ENCODE measurements at regions of chr6 and their contacts with region 1.

Region 1: DNA sequence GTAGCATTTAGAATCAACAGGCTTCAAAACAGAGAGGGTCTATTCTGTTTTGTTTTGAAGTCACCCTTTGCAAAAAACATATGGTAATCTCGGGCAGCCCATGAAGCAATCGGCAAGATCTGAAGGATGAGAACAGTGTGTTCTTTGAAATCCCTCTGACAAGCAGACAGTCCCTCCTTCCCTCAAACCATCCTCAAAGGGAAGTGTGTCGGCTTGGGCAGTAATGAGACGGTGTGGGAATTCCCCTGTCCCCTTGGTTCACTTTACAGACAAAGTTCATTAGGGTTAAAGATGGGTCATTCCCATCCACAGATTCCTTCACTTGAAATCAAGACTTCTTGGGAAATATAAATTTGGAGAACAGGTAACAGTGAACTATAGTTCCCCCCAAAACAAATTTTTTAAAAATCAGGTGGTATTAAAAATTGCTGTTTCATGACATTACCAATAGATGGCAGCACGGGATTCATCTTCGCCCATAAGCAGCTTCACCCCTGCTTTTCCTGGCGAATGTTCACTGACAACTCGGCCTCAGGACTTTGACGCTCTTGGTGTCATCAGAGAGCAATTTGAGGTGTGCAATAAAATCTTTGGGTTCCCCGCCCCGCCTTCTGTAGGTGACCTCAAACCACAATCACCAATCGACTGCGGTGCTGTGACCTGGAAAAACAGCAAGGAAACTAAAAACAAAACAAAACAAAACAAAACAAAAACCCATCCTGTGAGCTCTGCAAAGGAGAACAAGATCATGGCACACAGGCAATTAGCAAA is 159.3 kb upstream of the TNFAIP3 start:
- DNase-seq: peak; percentile 89
- H3K4me3 Mint-ChIP-seq: peak overlapping the region; percentile 70
- H3K27ac Mint-ChIP-seq: peak overlapping the region; percentile 94
- H3K4me1 Mint-ChIP-seq: peaks cover 76% of the 10 kb centered on the region
- H3K27me3 Mint-ChIP-seq: no peaks in the 10 kb centered on the region

Region 2: GRCh38 chr6:137552809-137553208 is 155.0 kb before region 1 on chr6:
- intact Hi-C with region 1: no loop called
- DNase-seq: no peak
- H3K4me3 Mint-ChIP-seq: no peak overlapping the region
- H3K27ac Mint-ChIP-seq: no peak overlapping the region
- H3K4me1 Mint-ChIP-seq: no peaks in the 10 kb centered on the region
- H3K27me3 Mint-ChIP-seq: peaks cover 13% of the 10 kb centered on the region

Region 3: DNA sequence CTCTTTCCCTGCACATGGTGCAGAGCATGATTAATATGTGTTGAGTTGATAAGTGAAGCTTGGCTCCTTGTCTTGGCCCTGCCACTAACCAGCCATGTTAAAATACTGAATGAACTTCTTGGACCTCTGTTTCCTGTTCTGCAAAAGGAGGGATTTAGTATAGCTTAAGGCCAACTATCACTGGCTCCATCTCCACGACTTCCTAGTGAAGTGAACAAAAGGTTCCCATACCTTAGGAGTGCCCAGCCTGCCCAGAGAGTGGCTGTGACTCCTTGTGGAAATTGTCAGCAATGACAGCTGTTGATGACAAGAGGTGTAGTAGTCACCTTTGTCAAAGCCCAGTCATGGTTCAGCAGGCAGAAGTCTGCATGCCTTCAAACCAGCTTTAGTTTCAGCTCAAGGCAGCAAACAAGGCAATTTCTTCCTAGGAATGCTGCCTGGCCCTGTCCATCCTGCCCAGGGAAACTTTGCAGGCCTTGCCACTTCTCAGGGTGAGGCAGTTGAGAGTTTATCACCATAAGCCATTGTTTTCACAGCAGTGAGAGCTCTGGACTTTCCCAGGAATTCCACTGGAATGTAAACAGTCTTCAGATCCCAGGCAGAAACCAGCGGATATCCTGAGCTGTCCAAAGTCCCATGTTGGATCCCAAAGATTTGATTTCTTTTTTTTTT is 10.4 kb before region 1 on chr6:
- intact Hi-C with region 1: loop called (anchors 1 kb)
- DNase-seq: no peak
- H3K4me3 Mint-ChIP-seq: no peak overlapping the region
- H3K27ac Mint-ChIP-seq: no peak overlapping the region
- H3K4me1 Mint-ChIP-seq: peaks cover 62% of the 10 kb centered on the region
- H3K27me3 Mint-ChIP-seq: no peaks in the 10 kb centered on the region

Region 4: GRCh38 chr6:137799950-137800568 is 92.3 kb after region 1 on chr6:
- intact Hi-C with region 1: loop called (anchors 1 kb)
- DNase-seq: peak; percentile 35
- H3K4me3 Mint-ChIP-seq: no peak overlapping the region
- H3K27ac Mint-ChIP-seq: peak overlapping the region; percentile 14
- H3K4me1 Mint-ChIP-seq: peaks cover 67% of the 10 kb centered on the region
- H3K27me3 Mint-ChIP-seq: no peaks in the 10 kb centered on the region

Region 5: DNA sequence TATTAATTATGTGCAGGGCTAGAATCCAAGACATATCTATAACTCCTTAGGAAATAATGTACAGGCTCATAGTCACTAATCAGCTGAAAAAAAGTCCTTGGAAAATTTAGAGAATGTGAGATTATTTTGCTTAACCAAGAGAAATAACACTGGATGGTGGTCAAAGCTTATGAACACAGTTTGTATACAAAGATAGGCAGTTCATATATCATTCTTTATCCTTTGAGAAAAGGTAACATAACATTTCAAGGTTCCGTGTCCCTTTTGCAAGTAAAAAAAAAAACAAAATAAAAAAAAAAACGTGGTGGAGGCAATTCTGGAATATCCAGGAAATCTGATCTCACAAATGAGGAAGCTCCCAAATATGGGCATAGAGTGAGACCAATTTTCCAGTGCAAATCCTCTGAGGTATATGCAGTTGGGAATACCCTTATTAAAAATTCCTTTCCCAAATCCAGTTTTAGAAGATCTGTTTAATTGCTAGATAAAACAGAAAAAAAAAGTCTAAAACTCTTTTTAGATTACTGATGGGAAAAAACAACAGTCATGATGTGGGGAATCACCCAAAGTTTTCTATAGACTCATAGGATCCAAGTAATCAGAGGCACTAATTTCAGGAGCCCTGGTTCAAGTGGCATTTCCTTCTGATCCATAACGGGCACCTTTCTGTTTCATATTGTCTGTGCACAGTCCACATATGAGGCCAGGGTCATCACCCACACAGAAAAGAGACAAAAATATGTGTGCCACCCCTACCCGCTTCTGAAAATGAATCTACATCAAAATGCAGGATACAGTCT is 141.6 kb after region 1 on chr6:
- intact Hi-C with region 1: loop called (anchors 1 kb)
- DNase-seq: no peak
- H3K4me3 Mint-ChIP-seq: no peak overlapping the region
- H3K27ac Mint-ChIP-seq: peak overlapping the region; percentile 53
- H3K4me1 Mint-ChIP-seq: peaks cover 23% of the 10 kb centered on the region
- H3K27me3 Mint-ChIP-seq: no peaks in the 10 kb centered on the region

Region 6: GRCh38 chr6:137903933-137904821 is 196.4 kb after region 1 on chr6:
- intact Hi-C with region 1: loop called (anchors 1 kb)
- DNase-seq: no peak
- H3K4me3 Mint-ChIP-seq: peak overlapping the region; percentile 19
- H3K27ac Mint-ChIP-seq: peak overlapping the region; percentile 97
- H3K4me1 Mint-ChIP-seq: peaks cover 59% of the 10 kb centered on the region
- H3K27me3 Mint-ChIP-seq: no peaks in the 10 kb centered on the region

Region 7: GRCh38 chr6:137975188-137975940 is 267.6 kb after region 1 on chr6:
- intact Hi-C with region 1: loop called (anchors 1 kb)
- DNase-seq: peak; percentile 39
- H3K4me3 Mint-ChIP-seq: peak overlapping the region; percentile 69
- H3K27ac Mint-ChIP-seq: peak overlapping the region; percentile 91
- H3K4me1 Mint-ChIP-seq: peaks cover 71% of the 10 kb centered on the region
- H3K27me3 Mint-ChIP-seq: no peaks in the 10 kb centered on the region

Region 8: GRCh38 chr6:138588805-138589434 is 881.1 kb after region 1 on chr6:
- intact Hi-C with region 1: loop called (anchors 10 kb)
- DNase-seq: peak; percentile 39
- H3K4me3 Mint-ChIP-seq: no peak overlapping the region
- H3K27ac Mint-ChIP-seq: no peak overlapping the region
- H3K4me1 Mint-ChIP-seq: peaks cover 27% of the 10 kb centered on the region
- H3K27me3 Mint-ChIP-seq: peaks cover 5% of the 10 kb centered on the region

Measured in activated T-helper 1 cell treated with anti-CD3 and anti-CD28 coated beads, Interleukin-12 subunit alpha, Interleukin-12 subunit beta, Interleukin-2, Interleukin-4 antibody, amounts not matched to agents 30 ng/mL and 10 ng/mL and 1 ng/mL, durations not matched to agents 14 hours and 24 hours and 36 hours (primary cell).